WTC11 (cell line): ENCODE measurements at regions of chr6 and their contacts with region 1.

Region 1: DNA sequence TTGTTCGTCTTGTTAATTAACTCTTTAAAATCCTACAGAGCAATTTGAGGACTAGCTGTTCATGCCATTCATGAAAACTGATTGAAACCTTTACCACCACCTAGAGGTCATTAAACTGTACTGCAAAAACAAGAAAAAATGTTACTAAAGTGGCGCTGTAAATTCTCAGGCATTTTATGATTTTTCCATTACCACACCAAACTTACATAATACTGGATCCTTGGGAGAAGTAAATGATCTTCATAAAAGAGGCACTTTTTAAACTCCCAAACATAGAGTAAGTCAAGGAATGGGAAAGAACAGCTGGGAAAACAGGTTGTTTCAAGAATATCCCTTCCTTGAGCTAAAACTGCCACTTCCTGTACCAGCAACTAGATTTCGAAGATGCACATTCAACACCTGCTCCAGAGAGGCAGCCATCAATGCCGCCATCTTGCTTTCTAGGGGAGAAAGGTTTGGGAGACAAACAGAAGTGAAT is 54.3 kb downstream of the MYLIP start:
- DNase-seq: no peak
- ATAC-seq: no peak
- H3K4me3 Mint-ChIP-seq: no peak overlapping the region
- H3K27ac Mint-ChIP-seq: 0 out of 2 replicates have a peak overlapping the region, but pooled peaks have one; percentile 12
- H3K4me1 Mint-ChIP-seq: peaks cover 12% of the 10 kb centered on the region
- H3K27me3 Mint-ChIP-seq: no peaks in the 10 kb centered on the region
- CTCF ChIP-seq: peak; percentile 58

Region 2: DNA sequence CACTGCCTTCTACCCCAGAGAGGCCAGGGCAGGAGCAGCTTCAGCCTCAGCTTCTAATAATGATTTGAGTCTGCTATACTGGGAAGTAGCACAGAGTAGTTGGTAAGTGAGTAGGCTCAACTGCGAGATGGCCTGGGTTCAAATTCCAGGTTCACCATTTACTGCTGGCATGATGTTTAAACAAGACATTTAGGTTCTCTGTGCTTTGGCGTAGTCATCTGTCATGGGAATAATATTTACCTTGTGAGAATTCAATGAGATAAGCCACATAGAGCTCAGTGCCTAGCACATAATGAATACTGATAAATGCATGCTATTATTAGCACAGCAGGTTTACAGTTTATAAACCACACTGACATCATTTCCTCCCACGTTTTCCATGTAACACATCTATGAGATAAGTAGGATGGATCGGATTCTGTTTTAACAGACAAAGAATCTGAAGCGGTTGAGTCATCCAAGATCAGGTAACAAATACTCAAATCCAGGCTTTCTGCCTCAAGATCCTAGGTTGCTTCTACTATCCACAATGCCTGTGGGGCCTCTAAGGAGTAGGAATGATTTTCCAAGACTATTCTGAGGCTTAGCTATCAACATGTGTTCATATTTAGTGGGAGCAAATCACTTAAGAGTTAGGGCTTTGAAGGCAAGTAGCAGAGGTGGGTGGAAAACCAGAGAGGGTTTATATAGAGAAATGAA is 447.5 kb before region 1 on chr6:
- CTCF ChIA-PET with region 1: interaction called, 11 read pairs
- POLR2A ChIA-PET with region 1: no interaction called
- DNase-seq: no peak
- ATAC-seq: no peak
- H3K4me3 Mint-ChIP-seq: no peak overlapping the region
- H3K27ac Mint-ChIP-seq: no peak overlapping the region
- H3K4me1 Mint-ChIP-seq: peaks cover 19% of the 10 kb centered on the region
- H3K27me3 Mint-ChIP-seq: no peaks in the 10 kb centered on the region
- CTCF ChIP-seq: no peak

Region 3: DNA sequence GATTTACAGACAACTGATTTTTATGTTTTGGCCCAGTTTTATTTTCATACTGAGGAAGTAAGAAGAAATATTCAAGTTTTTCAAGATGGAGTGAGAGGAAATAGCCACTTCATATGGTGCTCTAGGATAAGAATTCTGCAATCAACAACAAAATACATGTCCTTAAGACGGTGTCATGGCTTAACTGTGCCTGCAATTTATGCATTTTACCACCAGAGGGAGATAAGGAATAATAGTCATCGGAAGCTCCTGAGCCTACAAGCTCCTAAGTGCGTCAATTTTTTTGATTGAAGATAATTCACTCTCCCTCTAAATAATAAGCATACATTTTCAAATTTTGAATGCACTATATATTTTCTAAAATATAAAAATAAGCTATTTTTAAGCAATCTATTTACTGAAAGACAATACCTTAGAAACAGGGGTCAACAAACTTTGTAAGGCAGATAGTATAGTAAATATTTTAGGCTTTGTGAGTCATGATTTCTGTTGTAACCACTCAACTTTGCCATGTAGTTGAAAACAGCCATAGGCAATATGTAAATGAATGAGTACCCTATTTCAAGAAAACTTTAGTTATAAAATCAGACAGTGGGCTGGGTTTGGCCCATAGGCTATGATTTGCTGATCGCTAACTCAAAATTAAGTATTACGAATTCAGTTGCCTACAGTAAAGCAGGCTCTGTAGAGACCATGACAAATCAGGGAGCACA is 289.5 kb before region 1 on chr6:
- CTCF ChIA-PET with region 1: interaction called, 27 read pairs
- POLR2A ChIA-PET with region 1: no interaction called
- DNase-seq: no peak
- ATAC-seq: 0 out of 2 replicates have a peak, but pooled peaks have one; percentile 13
- H3K4me3 Mint-ChIP-seq: peak overlapping the region; percentile 57
- H3K27ac Mint-ChIP-seq: peak overlapping the region; percentile 80
- H3K4me1 Mint-ChIP-seq: peaks cover 53% of the 10 kb centered on the region
- H3K27me3 Mint-ChIP-seq: no peaks in the 10 kb centered on the region
- CTCF ChIP-seq: peak; percentile 77

Region 4: GRCh38 chr6:16078064-16078463 is 105.2 kb before region 1 on chr6:
- CTCF ChIA-PET with region 1: no interaction called
- POLR2A ChIA-PET with region 1: no interaction called
- DNase-seq: no peak
- ATAC-seq: no peak
- H3K4me3 Mint-ChIP-seq: no peak overlapping the region
- H3K27ac Mint-ChIP-seq: no peak overlapping the region
- H3K4me1 Mint-ChIP-seq: no peaks in the 10 kb centered on the region
- H3K27me3 Mint-ChIP-seq: peaks cover 4% of the 10 kb centered on the region
- CTCF ChIP-seq: no peak

Region 5: GRCh38 chr6:16168858-16169257 is 14.4 kb before region 1 on chr6:
- CTCF ChIA-PET with region 1: interaction called, 15 read pairs
- POLR2A ChIA-PET with region 1: no interaction called
- DNase-seq: no peak
- ATAC-seq: peak; percentile 91
- H3K4me3 Mint-ChIP-seq: no peak overlapping the region
- H3K27ac Mint-ChIP-seq: no peak overlapping the region
- H3K4me1 Mint-ChIP-seq: peaks cover 25% of the 10 kb centered on the region
- H3K27me3 Mint-ChIP-seq: no peaks in the 10 kb centered on the region
- CTCF ChIP-seq: no peak

Region 6: GRCh38 chr6:16206595-16207037 is 23.4 kb after region 1 on chr6:
- CTCF ChIA-PET with region 1: interaction called, 18 read pairs
- POLR2A ChIA-PET with region 1: no interaction called
- DNase-seq: peak; percentile 61
- ATAC-seq: peak; percentile 78
- H3K4me3 Mint-ChIP-seq: no peak overlapping the region
- H3K27ac Mint-ChIP-seq: no peak overlapping the region
- H3K4me1 Mint-ChIP-seq: peaks cover 2% of the 10 kb centered on the region; the same call in 1 of the 2 replicates
- H3K27me3 Mint-ChIP-seq: no peaks in the 10 kb centered on the region
- CTCF ChIP-seq: peak; percentile 98